ENCODE measurements at regions of chr7 and their contacts with region 1.

Region 1: GRCh38 chr7:87416682-87417587 is 58.5 kb downstream of the ABCB4 start:
- DNase-seq: peak; percentile 21
- H3K4me3 ChIP-seq: no peak overlapping the region
- H3K27ac ChIP-seq: no peak overlapping the region
- H3K27me3 ChIP-seq: no peaks in the 10 kb centered on the region
- CTCF ChIP-seq: peak; percentile 69

Region 2: GRCh38 chr7:87312215-87312865 is 104.6 kb before region 1 on chr7:
- CTCF ChIA-PET with region 1: interaction called, 454 read pairs
- POLR2A ChIA-PET with region 1: interaction called, 13 read pairs
- DNase-seq: peak; percentile 42
- H3K4me3 ChIP-seq: no peak overlapping the region
- H3K27ac ChIP-seq: no peak overlapping the region
- H3K27me3 ChIP-seq: no peaks in the 10 kb centered on the region
- CTCF ChIP-seq: peak; percentile 100

Region 3: DNA sequence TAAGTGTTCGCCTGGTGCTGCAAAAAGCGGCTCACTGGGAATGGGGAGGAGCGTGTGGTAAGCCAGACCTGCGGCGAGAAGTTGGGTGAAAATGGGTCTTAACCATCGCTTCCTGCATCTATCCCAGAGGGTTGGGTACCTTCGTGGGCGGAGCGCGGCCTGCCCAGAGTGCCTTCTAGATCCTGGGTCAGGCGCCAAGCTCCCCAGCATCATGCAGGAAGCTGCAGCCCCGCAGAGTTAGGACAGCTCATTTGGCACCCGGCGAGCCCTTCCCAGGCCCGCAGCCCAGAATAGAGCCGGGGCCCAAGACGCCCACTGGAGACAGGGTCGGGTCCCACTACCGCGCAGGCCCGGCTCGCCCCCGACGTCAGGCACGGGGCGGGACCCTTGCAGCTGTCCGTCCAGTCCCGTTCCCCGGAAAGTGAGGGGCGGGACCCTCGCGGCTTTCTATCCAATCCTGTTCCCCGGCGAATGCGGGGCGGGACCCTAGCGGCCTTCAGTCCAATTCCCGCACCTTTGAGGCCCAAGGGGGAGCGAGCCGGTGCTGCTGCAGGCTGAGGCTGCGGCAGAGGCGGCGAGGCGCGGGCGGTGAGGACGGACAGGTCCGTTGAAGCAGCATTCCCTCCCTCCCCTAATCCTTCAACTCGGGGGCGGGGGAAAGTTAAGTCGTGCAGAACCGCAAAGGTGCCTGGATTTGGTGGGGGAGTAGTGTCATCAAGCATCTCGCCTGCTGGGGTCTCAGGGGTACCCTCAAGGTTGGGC is 71.6 kb before region 1 on chr7 and contains the start of gene CROT:
- CTCF ChIA-PET with region 1: interaction called, 13 read pairs
- POLR2A ChIA-PET with region 1: interaction called, 5 read pairs
- DNase-seq: peak; percentile 82
- H3K4me3 ChIP-seq: peak within 1 kb of the TSS; percentile 77
- H3K27ac ChIP-seq: peak within 1 kb of the TSS; percentile 71
- H3K27me3 ChIP-seq: no peaks in the 10 kb centered on the region
- CTCF ChIP-seq: no peak
- polyA plus RNA-seq, gene CROT: 32.3 and 48.3 TPM in 2 replicates

Measured in AG04450 (cell line).